GM10248 (cell line): ENCODE measurements at regions of chr1 and their contacts with region 1.

Region 1: DNA sequence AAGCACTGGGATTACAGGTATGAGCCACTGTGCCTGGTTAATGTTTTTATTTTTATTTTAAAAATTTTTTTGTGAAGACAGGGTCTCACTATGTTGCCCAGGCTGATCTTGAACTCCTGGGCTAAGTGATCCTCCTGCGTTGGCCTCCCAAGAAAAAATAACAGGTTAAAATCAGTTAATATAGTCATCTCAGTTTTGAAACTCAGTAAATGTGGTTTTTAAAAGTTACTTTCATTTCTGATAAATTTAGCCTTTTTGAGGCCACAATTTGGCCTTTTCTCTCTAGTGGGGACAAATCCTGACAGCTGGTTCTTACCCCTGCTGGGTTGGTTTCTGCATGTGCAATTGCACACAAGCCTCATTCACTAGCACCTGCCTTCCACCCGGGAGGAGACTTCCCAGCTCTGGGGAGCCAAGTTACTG is 13.3 kb downstream of the PMF1 start:
- DNase-seq: peak; percentile 75
- CTCF ChIP-seq: no peak

Region 2: DNA sequence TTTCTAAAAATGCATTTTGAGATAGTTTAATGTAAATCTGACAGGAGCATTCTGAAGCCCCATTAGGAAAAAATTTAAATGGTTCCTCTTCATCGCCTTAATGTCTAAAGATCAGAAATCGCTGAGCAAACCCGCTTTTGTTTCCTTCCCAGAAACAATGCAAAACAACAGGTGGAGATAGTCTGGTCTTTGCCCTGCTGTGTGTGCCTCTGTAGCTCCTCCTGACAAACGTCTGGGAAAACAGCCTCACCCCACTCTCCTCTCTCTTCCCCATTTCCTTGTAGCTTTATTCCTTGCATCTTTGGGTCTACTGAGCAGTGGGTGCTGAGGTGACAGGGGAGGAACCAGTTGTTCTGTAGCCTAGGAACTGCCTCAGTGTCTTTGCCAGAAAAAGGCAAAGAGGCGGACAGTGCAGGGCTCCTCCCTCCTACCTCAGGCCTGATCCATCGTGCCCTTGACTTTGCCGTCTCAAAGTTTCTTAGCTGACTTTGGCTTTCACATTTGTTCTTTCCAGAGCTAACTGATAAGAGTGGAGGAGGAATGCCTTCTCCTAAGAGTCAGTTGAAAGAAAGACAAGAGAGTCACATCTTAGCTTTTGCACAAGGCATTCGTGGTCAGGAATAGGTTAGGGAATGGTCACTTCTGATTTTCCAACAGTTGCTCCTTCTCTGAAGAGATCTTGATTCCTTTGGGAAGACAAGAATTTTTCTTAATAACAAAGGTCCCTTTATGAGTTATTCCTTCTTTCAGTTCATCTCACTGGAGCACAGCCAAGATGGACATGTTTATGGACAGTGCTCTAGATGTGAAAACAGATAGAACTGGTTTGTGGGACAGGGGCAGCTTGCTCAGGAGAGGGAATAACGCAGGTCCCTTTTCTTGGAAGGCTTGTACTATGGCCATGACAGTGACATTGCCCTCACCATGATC is 341.8 kb before region 1 on chr1:
- CTCF ChIA-PET with region 1: no interaction called
- POLR2A ChIA-PET with region 1: no interaction called
- DNase-seq: no peak
- CTCF ChIP-seq: no peak

Region 3: DNA sequence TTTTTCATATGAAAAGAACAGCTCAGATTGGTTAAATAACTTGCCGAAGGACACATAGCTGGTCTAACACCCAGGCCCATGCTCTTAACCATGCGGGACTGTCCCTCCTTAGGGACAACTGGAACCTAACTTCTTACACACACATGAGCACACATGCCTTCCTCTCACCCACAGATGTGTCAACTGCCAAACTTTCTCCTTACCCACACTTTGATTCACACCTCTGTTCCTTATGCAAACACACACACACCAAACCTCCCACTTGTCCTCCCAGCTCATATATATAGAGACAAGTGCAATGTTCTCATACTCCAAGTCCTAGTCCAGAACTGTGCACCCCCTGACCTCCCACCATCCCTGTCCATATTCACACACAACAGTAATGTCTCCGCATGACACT is 160.9 kb before region 1 on chr1:
- CTCF ChIA-PET with region 1: interaction called, 10 read pairs
- POLR2A ChIA-PET with region 1: no interaction called
- DNase-seq: no peak
- CTCF ChIP-seq: no peak

Region 4: DNA sequence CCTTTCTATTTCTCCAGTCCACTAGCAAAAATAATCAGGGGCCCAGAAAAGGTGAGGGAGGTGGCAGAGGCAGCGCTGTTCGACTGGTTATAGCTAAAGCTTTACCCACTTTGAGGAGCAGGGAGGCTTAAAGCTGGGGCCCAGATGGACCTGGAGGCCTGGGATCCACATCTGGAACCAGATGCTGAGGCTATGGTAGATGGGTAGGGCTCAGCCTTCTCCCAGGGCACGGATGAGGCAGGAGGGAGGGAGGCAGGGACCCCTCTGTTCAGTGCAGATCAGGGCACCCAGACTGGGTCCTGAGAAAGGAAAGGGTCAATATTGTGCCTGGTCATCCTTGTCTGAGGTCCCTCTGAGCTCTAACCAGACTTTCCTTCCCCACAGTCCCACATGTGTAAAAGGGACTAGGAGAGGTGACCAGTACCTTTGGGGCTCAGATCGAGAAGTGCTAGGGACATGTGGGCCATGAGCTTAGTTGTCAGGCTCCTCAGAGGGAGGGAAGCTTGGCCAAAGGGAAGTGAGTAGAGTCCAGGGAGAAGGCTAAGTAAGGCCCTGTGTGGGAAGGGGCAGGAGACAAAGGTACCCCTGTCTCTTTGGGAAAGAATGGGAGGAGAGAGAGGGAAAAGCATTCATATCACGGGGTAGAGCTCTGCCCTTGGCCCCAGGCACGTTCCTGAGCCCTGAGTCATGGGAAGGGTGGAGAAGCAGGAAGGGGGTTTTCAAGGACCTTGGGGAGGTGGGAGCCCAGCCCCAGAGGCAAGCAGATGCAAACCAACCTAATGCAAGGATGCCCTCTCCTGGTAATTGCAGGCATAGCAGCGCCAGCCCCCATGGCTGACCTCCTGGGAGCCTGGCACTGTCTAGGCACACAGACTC is 96.2 kb before region 1 on chr1:
- CTCF ChIA-PET with region 1: interaction called, 32 read pairs
- POLR2A ChIA-PET with region 1: no interaction called
- DNase-seq: peak; percentile 77
- CTCF ChIP-seq: peak; percentile 96

Region 5: GRCh38 chr1:156193488-156194299 is 32.4 kb before region 1 on chr1 and contains the start of gene SLC25A44:
- CTCF ChIA-PET with region 1: interaction called, 27 read pairs
- POLR2A ChIA-PET with region 1: no interaction called
- DNase-seq: peak; percentile 94
- CTCF ChIP-seq: peak; percentile 32

Region 6: GRCh38 chr1:156238248-156238647 is 12.1 kb after region 1 on chr1:
- CTCF ChIA-PET with region 1: interaction called, 12 read pairs
- POLR2A ChIA-PET with region 1: interaction called, 5 read pairs
- DNase-seq: no peak
- CTCF ChIP-seq: no peak

Region 7: DNA sequence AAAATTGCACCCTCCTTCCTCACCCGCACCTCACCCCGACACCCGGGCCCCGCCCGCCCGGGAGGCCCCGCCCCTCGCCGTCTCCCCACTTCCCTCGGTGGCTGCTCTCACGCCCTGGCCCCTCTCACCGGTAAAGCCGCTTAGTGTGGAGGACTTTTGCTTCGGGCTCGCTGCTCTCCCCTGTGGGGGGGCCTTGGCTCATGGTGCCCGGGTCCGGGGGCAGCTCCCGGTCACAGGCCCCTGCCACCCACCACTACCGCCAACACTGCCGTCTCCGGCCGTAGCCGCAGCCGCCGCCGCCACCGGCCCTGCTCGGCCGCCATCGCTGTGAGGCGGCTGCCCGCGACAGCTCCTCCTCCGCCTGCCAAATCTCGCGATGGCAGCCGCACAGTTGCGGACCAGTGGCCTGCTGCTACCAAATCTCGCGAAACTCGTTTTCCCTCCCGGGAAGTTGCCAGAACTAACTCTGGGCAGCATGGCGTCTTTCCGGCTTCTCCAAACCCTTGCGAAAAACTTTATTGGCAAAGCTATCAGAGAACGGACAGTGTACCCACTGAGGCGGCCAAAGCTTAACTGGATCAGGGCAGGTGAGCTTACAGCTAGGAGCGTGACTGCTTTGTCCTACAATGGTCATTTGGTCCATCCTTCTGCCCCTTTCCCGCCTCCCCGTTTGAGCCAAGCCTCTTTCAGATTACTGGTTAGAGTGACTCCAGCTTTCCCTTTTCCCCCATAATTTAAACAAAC is 56.5 kb after region 1 on chr1 and contains the start of gene SMG5:
- CTCF ChIA-PET with region 1: interaction called, 11 read pairs
- POLR2A ChIA-PET with region 1: no interaction called
- DNase-seq: peak; percentile 95
- CTCF ChIP-seq: no peak